T-cell (primary cell): ENCODE measurements at regions of chr3 and their contacts with region 1.

Region 1: DNA sequence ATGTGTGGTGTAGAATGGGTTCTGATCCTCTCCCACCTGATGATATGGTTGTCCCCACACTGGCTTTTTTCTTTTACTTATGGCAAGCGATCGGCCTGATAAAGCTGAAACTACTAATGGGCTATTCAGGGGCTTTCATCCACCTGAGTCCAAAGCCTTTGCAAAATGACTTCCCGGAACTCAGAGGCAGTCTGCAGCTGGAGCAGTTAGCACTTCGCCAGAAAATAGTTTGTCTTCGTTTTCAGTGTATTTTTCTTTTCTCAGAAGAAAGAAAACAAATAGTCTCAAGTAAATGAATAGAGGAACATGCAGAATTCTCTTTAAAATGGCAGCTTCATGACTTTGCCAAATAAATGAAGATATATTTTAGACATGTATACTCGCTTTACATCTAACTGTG is 306.0 kb upstream of the ADAMTS9 start:
- DNase-seq: no peak
- ATAC-seq: no peak
- H3K4me3 ChIP-seq: no peak overlapping the region
- H3K4me3 Mint-ChIP-seq: no peak overlapping the region
- H3K27ac ChIP-seq: no peak overlapping the region
- H3K27ac Mint-ChIP-seq: no peak overlapping the region
- H3K4me1 ChIP-seq: no peaks in the 10 kb centered on the region
- H3K4me1 Mint-ChIP-seq: no peaks in the 10 kb centered on the region
- H3K27me3 ChIP-seq: no peaks in the 10 kb centered on the region
- H3K27me3 Mint-ChIP-seq: no peaks in the 10 kb centered on the region

Region 2: GRCh38 chr3:64748244-64748904 is 245.4 kb before region 1 on chr3:
- CTCF ChIA-PET with region 1: no interaction called
- POLR2A ChIA-PET with region 1: interaction called in 1 of 2 experiments, 10 read pairs
- DNase-seq: no peak
- ATAC-seq: no peak
- H3K4me3 ChIP-seq: no peak overlapping the region
- H3K4me3 Mint-ChIP-seq: no peak overlapping the region
- H3K27ac ChIP-seq: no peak overlapping the region
- H3K27ac Mint-ChIP-seq: no peak overlapping the region
- H3K4me1 ChIP-seq: no peaks in the 10 kb centered on the region
- H3K4me1 Mint-ChIP-seq: no peaks in the 10 kb centered on the region
- H3K27me3 ChIP-seq: no peaks in the 10 kb centered on the region
- H3K27me3 Mint-ChIP-seq: no peaks in the 10 kb centered on the region